Prostate gland (tissue), 2 donors: ENCODE measurements at regions of chr13 and their contacts with region 1.

Region 1: GRCh38 chr13:95296326-95296925 is 4.8 kb downstream of the ABCC4 start:
- DNase-seq: no peak
- H3K4me3 ChIP-seq: no peak overlapping the region
- H3K27ac ChIP-seq: peak overlapping the region; percentile 81 to 89
- H3K4me1 ChIP-seq: no peaks in the 10 kb centered on the region
- H3K27me3 ChIP-seq: no peaks in the 10 kb centered on the region
- CTCF ChIP-seq: peak in 3 of 4 experiments; percentile 38 to 57 (median 57)
- POLR2A ChIP-seq: no peak

Region 2: DNA sequence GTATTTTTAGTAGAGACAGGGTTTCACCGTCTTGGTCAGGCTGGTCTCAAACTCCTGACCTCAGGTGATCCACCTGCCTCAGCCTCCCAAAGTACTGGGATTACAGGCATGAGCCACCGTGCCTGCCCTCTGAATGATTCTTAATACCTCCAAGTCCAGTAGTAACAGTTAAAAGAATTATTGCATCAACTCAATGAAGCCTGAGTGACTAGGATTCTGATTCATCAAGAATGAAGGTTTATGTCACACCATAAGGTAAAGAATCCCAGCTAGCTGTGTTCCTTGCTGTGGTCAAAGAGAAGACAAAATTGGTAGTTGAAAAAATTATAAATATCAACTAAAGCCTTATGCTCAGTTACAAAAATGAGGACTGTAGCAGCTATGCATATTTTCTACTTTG is 86.0 kb after region 1 on chr13:
- intact Hi-C with region 1: loop called (anchors 5 kb)
- DNase-seq: no peak
- H3K4me3 ChIP-seq: no peak overlapping the region
- H3K27ac ChIP-seq: no peak overlapping the region
- H3K4me1 ChIP-seq: no peaks in the 10 kb centered on the region
- H3K27me3 ChIP-seq: no peaks in the 10 kb centered on the region
- CTCF ChIP-seq: no peak
- POLR2A ChIP-seq: no peak

Region 3: DNA sequence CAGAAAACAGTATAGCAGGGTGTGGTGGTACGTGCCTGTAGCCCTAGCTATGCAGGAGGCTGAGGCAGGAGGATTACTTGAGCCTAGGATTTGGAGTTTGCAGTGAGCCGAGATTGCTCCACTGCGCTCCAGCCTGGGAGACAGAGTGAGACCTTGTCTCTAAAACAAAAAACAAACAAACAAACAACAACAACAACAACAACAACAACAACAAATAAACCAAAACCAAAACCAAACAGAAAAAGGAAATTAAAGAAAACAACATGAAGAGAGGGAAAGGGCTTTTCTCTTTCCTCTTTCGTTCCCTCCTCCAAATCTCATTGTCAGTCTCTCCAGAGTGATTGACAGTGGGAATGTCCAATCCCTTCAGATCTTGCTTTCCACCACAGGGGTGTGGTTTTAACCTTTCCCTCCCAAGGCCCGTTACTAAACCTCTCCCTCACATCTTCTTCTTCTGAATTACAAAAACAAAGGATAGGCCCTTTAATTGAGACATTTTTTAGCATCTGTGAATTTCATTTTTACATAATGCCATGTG is 1134.7 kb after region 1 on chr13:
- intact Hi-C with region 1: no loop called
- DNase-seq: no peak
- H3K4me3 ChIP-seq: no peak overlapping the region
- H3K27ac ChIP-seq: no peak overlapping the region
- H3K4me1 ChIP-seq: no peaks in the 10 kb centered on the region
- H3K27me3 ChIP-seq: no peaks in the 10 kb centered on the region
- CTCF ChIP-seq: no peak
- POLR2A ChIP-seq: no peak